HepG2 (cell line): ENCODE measurements at regions of chr2 and their contacts with region 1.

Region 1: GRCh38 chr2:68467077-68467960 is at the starts of genes APLF and FBXO48:
- DNase-seq: peak; percentile 100
- ATAC-seq: peak; percentile 96
- H3K4me3 ChIP-seq: peak within 1 kb of the TSS; percentile 87 to 95 (median 90)
- H3K27ac ChIP-seq: peak within 1 kb of the TSS; percentile 70
- H3K4me1 ChIP-seq: peaks cover 28% of the 10 kb centered on the region
- H3K27me3 ChIP-seq: no peaks in the 10 kb centered on the region; a peak in 1 of 5 replicates
- CTCF ChIP-seq: peak; percentile 19; the same call in 1 of the 2 replicates
- EP300 ChIP-seq: peak in 1 of 2 experiments; percentile 60; a peak in 3 of 4 replicates
- POLR2A ChIP-seq: peak; percentile 76 to 80
- RAD21 ChIP-seq: peak; percentile 66
- total RNA-seq, gene APLF: 2.0 and 2.2 TPM in 2 replicates
- total RNA-seq, gene FBXO48: 0.42 and 0.59 TPM in 2 replicates

Region 2: DNA sequence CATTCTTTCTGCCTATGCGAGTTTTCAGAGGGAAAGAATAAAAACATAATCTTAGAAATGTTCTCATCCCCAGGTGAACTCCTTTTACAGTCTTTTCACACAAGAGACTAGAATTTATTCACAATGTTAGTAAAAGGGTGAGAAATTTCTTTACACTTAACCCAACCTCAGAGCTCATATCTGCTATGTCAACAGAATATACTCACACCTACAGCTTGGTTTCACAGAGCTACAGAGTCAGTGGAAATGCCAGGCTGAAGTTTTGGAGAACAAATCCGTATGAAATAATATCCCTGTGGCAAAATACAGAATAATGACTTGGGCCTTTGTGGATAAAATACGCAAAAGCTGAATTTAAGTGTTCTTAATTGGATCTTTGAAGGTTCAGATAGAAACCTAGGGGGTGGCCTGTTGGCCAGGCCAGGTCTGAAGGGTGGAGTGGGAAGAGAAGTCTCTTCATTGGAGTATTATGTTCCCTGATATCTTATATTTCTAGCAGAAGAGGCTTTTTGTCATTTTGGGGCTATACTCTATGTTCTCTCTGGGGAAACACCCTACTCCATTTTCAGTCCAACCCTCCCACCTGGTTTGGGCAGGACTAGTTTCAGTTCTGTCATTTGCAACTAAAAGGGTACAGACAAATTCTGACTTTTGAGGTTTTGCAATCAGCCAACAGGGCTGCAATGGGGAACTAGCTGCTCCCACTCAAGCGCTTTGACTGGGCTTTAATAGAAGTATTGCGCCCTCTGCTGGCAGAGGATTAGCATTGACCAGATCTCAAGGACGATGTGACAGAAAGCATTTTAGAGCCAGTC is 25.9 kb before region 1 on chr2:
- CTCF ChIA-PET with region 1: no interaction called
- POLR2A ChIA-PET with region 1: no interaction called
- in situ Hi-C with region 1: no loop called
- intact Hi-C with region 1: no loop called
- DNase-seq: peak; percentile 89
- ATAC-seq: peak; percentile 94
- H3K4me3 ChIP-seq: no peak overlapping the region
- H3K27ac ChIP-seq: no peak overlapping the region
- H3K4me1 ChIP-seq: no peaks in the 10 kb centered on the region; the same call in 1 of the 2 replicates
- H3K27me3 ChIP-seq: peaks cover 0 to 11% of the 10 kb centered on the region in 2 experiments; a peak in 1 of 5 replicates
- CTCF ChIP-seq: peak; percentile 91
- EP300 ChIP-seq: no peak
- POLR2A ChIP-seq: no peak
- RAD21 ChIP-seq: peak; percentile 73; the same call in 1 of the 2 replicates

Region 3: GRCh38 chr2:68594674-68595492 is 127.6 kb after region 1 on chr2:
- CTCF ChIA-PET with region 1: interaction called, 12 read pairs
- POLR2A ChIA-PET with region 1: interaction called, 4 read pairs
- in situ Hi-C with region 1: no loop called
- intact Hi-C with region 1: loop called (anchors 1 kb)
- DNase-seq: peak; percentile 70
- ATAC-seq: peak; percentile 93
- H3K4me3 ChIP-seq: peak overlapping the region in 2 of 3 experiments; percentile 5 to 37; a peak in 2 of 6 replicates
- H3K27ac ChIP-seq: no peak overlapping the region
- H3K4me1 ChIP-seq: peaks cover 13% of the 10 kb centered on the region
- H3K27me3 ChIP-seq: peaks cover 0 to 2% of the 10 kb centered on the region in 2 experiments; a peak in 1 of 5 replicates
- CTCF ChIP-seq: peak; percentile 65
- EP300 ChIP-seq: peak in 1 of 2 experiments; percentile 40; a peak in 1 of 4 replicates
- POLR2A ChIP-seq: no peak
- RAD21 ChIP-seq: no peak

Region 4: DNA sequence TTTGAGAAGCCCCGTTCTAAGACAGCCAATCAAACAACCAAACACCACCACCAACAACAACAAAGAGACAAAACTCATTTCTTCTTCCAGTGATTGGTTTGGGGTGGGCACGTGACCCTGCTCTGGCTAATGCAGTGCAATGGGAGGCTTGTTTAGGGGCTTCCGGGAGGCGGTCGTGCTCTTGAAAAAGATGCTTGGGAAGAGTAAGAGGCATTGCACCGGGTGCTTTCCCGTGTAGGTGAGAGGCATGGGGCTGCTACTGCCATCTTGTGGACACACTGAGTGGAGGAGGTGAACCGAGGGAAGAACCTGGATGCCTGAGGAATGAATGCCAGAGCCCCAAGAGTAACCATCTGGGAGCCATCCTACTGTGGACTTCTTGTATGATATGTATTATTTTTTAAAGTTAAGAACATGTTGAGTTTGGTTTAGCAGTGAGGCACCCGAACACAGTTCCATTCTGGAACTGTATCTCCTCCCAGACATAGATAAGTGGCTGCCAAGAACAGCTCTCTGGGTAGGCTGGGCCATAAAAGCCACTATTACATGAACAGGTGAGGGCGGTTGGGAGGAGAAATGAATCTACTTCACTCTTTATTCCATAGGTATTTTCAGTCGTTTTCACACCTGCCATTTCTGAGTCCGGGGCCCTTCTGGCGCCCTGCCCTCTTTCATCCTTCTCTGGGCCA is 248.2 kb after region 1 on chr2:
- CTCF ChIA-PET with region 1: interaction called, 48 read pairs
- POLR2A ChIA-PET with region 1: no interaction called
- in situ Hi-C with region 1: no loop called
- intact Hi-C with region 1: loop called (anchors 1 kb)
- DNase-seq: peak; percentile 71
- ATAC-seq: peak; percentile 100
- H3K4me3 ChIP-seq: no peak overlapping the region
- H3K27ac ChIP-seq: no peak overlapping the region
- H3K4me1 ChIP-seq: no peaks in the 10 kb centered on the region
- H3K27me3 ChIP-seq: no peaks in the 10 kb centered on the region
- CTCF ChIP-seq: peak; percentile 87
- EP300 ChIP-seq: no peak
- POLR2A ChIP-seq: no peak
- RAD21 ChIP-seq: peak; percentile 61

Region 5: DNA sequence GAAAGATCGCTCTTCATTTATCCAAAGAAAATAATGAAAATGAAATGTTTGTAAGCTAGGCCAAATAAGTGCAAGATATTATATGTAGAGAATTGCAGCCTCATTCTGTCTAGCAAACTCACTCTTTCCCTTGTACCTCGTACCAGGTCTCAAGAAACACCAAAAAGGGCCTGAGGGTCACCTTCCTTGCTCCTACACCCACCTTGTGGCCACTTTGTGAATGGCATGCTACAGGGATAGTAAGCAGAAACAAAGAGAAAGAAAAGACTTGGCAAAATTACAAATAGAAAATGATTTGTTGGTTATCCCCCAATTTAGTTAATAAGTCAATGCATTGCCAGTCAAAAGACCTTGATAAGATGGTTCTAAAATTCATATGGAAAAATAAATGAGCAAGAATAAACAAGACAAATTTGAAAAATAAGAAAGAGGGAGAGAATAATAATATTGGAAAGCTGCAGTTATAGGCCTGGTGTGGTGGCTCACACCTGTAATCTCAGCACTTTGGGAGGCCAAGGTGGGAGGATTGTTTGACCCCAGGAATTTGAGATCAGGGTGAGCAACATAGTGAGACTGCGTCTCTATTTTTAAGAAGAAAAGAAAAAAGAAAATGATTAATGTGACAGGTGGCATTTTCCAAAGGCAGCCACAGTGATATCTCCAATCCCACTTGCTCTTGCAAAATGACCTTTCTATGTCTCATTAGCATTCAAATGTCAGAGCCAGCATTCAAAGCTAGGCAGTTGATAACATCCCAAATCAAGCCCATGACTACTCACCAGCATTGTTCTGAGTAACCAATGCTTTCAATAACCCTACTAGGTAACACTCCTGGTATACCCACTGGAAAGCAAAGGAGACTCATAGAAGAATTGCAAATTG is 442.7 kb after region 1 on chr2:
- CTCF ChIA-PET with region 1: interaction called, 4 read pairs
- POLR2A ChIA-PET with region 1: no interaction called
- in situ Hi-C with region 1: no loop called
- intact Hi-C with region 1: loop called (anchors 1 kb)
- DNase-seq: peak; percentile 58
- ATAC-seq: peak; percentile 73
- H3K4me3 ChIP-seq: no peak overlapping the region
- H3K27ac ChIP-seq: no peak overlapping the region
- H3K4me1 ChIP-seq: peaks cover 10% of the 10 kb centered on the region
- H3K27me3 ChIP-seq: peaks cover 1 to 15% of the 10 kb centered on the region in 2 experiments; a peak in 1 of 5 replicates
- CTCF ChIP-seq: peak; percentile 84
- EP300 ChIP-seq: no peak
- POLR2A ChIP-seq: no peak
- RAD21 ChIP-seq: no peak